MCF 10A (cell line): ENCODE measurements at regions of chr3 and their contacts with region 1.

Region 1: GRCh38 chr3:111539351-111540331 is 2.4 kb upstream of the CD96 start:
- DNase-seq: peak; percentile 64
- H3K4me3 Mint-ChIP-seq: no peak overlapping the region
- H3K27ac Mint-ChIP-seq: no peak overlapping the region
- H3K4me1 Mint-ChIP-seq: peaks cover 22% of the 10 kb centered on the region
- H3K27me3 Mint-ChIP-seq: no peaks in the 10 kb centered on the region
- CTCF ChIP-seq: peak; percentile 61

Region 2: DNA sequence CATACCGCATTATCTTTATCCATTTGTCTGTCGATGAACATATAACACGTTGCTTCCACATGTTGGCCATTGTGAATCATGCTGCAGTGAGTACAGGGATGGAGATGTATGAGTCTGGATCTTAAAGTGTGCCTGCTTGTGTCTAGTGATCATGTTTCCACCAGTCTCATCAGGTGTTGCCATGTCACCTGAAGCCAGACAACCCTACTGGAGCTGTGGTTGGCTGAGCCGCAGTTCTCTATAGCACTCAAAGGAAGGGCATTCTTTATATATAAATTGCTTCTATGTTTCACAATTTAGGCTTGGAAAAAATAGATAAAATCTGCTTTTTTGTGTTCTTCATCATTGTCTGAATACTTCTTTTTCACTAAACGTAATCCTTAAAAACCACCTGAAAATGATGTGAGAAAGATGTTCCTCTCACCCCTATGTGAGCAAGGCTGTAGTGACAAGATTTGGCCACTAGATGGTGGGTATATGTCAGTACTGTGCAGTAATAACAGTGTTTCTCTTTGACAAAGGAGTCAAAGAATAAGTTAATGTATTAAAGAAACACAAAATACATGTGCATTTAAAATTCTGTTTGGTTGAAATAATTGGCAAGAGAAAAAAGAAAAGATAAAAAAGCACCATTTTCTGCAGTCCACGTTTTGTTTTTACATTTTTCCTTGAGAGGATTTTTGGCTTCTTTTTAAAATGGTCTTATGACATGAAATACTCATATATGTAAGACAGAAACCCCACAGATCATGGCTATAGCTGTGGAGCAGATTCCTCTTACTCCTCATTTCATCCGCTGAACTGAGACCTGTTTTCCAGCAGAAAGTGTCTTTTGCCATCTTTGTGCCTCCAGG is 1807.8 kb before region 1 on chr3:
- CTCF ChIA-PET with region 1: no interaction called
- POLR2A ChIA-PET with region 1: no interaction called
- intact Hi-C with region 1: loop called (anchors 2 kb)
- DNase-seq: peak; percentile 72
- H3K4me3 Mint-ChIP-seq: no peak overlapping the region
- H3K27ac Mint-ChIP-seq: no peak overlapping the region
- H3K4me1 Mint-ChIP-seq: peaks cover 7% of the 10 kb centered on the region
- H3K27me3 Mint-ChIP-seq: no peaks in the 10 kb centered on the region
- CTCF ChIP-seq: peak; percentile 85

Region 3: DNA sequence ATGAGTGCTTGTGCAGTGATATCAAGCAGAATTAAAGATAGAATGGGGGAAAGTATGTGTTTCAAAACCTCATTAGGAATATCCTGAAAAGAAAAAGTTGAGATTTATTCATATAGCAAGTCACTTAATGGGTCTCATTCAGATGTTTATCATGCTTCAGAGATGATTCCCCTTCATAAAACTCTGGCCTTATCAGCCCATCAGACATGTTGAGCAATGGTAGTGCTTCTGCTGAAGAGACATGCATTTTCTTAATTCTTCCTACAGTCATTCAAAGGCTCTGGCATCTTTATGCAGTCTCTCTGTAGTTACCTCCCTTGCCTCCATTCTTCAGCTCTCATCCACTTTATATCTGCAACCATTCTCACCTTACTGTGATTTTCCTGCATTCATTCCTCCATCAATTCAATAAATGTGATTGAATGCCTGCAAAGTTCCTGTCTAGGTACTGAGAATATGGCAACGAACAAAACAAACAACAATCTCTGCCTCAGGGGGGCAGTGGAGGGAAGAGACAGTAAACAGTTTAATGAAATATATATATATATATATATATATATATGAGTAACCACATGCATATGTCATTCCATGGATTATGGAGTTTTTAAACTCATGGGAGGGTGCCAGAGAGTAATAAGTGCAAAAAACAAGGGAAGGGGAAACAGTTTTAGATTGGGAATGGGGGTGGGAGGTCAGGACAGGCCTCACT is 329.5 kb before region 1 on chr3:
- CTCF ChIA-PET with region 1: no interaction called
- POLR2A ChIA-PET with region 1: no interaction called
- intact Hi-C with region 1: loop called (anchors 2 kb)
- DNase-seq: peak; percentile 46
- H3K4me3 Mint-ChIP-seq: no peak overlapping the region
- H3K27ac Mint-ChIP-seq: no peak overlapping the region
- H3K4me1 Mint-ChIP-seq: no peaks in the 10 kb centered on the region
- H3K27me3 Mint-ChIP-seq: no peaks in the 10 kb centered on the region
- CTCF ChIP-seq: no peak